ENCODE measurements at regions of chr1 and their contacts with region 1.

Region 1: GRCh38 chr1:178031856-178032320 is 62.0 kb upstream of the RASAL2 start:
- DNase-seq: peak; percentile 84
- ATAC-seq: peak; percentile 97
- H3K4me3 ChIP-seq: no peak overlapping the region
- H3K27ac ChIP-seq: no peak overlapping the region
- H3K4me1 ChIP-seq: peaks cover 58% of the 10 kb centered on the region
- H3K27me3 ChIP-seq: no peaks in the 10 kb centered on the region
- CTCF ChIP-seq: peak; percentile 89
- EP300 ChIP-seq: no peak
- POLR2A ChIP-seq: no peak
- RAD21 ChIP-seq: peak; percentile 90

Region 2: DNA sequence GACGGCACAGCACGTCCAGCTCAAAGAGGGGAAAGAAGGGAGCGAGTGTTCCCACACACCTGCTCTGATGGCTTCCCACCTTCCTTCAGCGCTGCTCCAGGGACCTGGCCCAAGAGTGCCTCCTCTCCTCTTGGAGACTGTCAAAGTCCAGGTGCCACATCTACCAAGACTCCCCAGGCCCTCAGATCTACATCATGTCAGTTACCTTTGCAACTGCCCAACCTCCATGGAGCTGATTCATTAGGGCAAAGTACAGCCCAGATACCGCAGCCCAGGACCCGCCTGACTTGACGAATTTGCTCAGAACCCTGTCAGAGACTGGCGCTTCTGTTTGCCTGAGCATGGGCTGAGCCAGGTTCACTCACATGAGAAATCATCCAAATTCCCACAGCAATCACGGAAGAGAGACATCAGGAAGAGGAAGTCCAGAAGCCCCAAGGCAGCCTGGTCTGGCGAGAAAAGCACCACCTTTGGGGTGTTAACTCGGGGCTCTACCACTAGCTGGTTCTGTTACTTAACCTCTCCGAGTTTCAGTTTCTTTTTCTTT is 62.0 kb before region 1 on chr1 and contains the start of gene SEC16B:
- CTCF ChIA-PET with region 1: no interaction called
- POLR2A ChIA-PET with region 1: interaction called, 14 read pairs
- in situ Hi-C with region 1: no loop called
- intact Hi-C with region 1: no loop called
- DNase-seq: peak; percentile 87
- ATAC-seq: peak; percentile 99
- H3K4me3 ChIP-seq: peak within 1 kb of the TSS; percentile 56 to 76 (median 70)
- H3K27ac ChIP-seq: peak within 1 kb of the TSS; percentile 88
- H3K4me1 ChIP-seq: peaks cover 30% of the 10 kb centered on the region
- H3K27me3 ChIP-seq: no peaks in the 10 kb centered on the region; a peak in 1 of 5 replicates
- CTCF ChIP-seq: 0 out of 2 replicates have a peak, but pooled peaks have one; percentile 1
- EP300 ChIP-seq: peak in 1 of 2 experiments; percentile 40; a peak in 2 of 4 replicates
- POLR2A ChIP-seq: peak; percentile 54 to 78; a peak in 3 of 4 replicates
- RAD21 ChIP-seq: no peak
- total RNA-seq, gene SEC16B: 5.3 and 5.8 TPM in 2 replicates

Region 3: GRCh38 chr1:178189814-178190213 is 157.9 kb after region 1 on chr1:
- CTCF ChIA-PET with region 1: interaction called, 9 read pairs
- POLR2A ChIA-PET with region 1: no interaction called
- in situ Hi-C with region 1: no loop called
- intact Hi-C with region 1: loop called (anchors 1 kb)
- DNase-seq: peak; percentile 51
- ATAC-seq: peak; percentile 86
- H3K4me3 ChIP-seq: no peak overlapping the region
- H3K27ac ChIP-seq: no peak overlapping the region
- H3K4me1 ChIP-seq: peaks cover 4% of the 10 kb centered on the region; the same call in 1 of the 2 replicates
- H3K27me3 ChIP-seq: no peaks in the 10 kb centered on the region
- CTCF ChIP-seq: peak; percentile 86
- EP300 ChIP-seq: no peak
- POLR2A ChIP-seq: no peak
- RAD21 ChIP-seq: peak; percentile 70

Region 4: GRCh38 chr1:178282949-178283367 is 251.1 kb after region 1 on chr1:
- CTCF ChIA-PET with region 1: no interaction called
- POLR2A ChIA-PET with region 1: no interaction called
- in situ Hi-C with region 1: loop called (anchors 5 kb)
- intact Hi-C with region 1: loop called (anchors 1 kb)
- DNase-seq: peak; percentile 25
- ATAC-seq: no peak
- H3K4me3 ChIP-seq: no peak overlapping the region
- H3K27ac ChIP-seq: no peak overlapping the region
- H3K4me1 ChIP-seq: peaks cover 7% of the 10 kb centered on the region; the same call in 1 of the 2 replicates
- H3K27me3 ChIP-seq: no peaks in the 10 kb centered on the region
- CTCF ChIP-seq: peak; percentile 49
- EP300 ChIP-seq: no peak
- POLR2A ChIP-seq: no peak
- RAD21 ChIP-seq: no peak

Measured in HepG2 (cell line).